ENCODE measurements at regions of chr3 and their contacts with region 1.

Region 1: GRCh38 chr3:150227839-150228238 is 180.3 kb upstream of the TSC22D2 start:
- DNase-seq: peak; percentile 69
- ATAC-seq: peak; percentile 93
- H3K4me3 ChIP-seq: no peak overlapping the region
- H3K27ac ChIP-seq: no peak overlapping the region
- H3K4me1 ChIP-seq: no peaks in the 10 kb centered on the region
- H3K27me3 ChIP-seq: no peaks in the 10 kb centered on the region
- CTCF ChIP-seq: peak; percentile 87
- POLR2A ChIP-seq: no peak
- RAD21 ChIP-seq: peak; percentile 89

Region 2: DNA sequence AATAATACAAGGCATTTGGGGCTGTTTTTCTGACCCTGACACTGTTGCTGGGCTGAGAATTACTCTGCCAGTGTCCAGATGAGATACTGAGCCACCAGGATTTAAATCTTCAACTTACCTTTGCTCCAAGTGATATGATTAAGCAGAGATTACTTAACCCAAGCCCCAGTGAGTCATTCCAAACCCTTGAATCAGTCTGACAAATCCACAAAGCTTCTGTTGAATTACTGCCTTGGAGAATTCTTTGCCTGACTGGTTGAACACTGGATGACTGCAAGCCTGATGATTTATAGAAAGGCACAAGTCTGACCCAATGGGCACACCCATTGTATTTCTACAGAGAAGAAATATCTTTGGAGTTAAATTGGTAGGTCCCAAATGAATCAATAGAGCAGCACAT is 92.1 kb after region 1 on chr3:
- CTCF ChIA-PET with region 1: no interaction called
- POLR2A ChIA-PET with region 1: no interaction called
- dilution Hi-C with region 1: no loop called
- in situ Hi-C with region 1: no loop called
- intact Hi-C with region 1: no loop called
- DNase-seq: peak; percentile 96
- ATAC-seq: peak; percentile 94
- H3K4me3 ChIP-seq: no peak overlapping the region
- H3K27ac ChIP-seq: no peak overlapping the region
- H3K4me1 ChIP-seq: peaks cover 7% of the 10 kb centered on the region
- H3K27me3 ChIP-seq: no peaks in the 10 kb centered on the region
- CTCF ChIP-seq: no peak
- POLR2A ChIP-seq: no peak
- RAD21 ChIP-seq: no peak

Region 3: GRCh38 chr3:150495563-150496168 is 267.8 kb after region 1 on chr3:
- CTCF ChIA-PET with region 1: no interaction called
- POLR2A ChIA-PET with region 1: interaction called, 7 read pairs
- dilution Hi-C with region 1: no loop called
- in situ Hi-C with region 1: loop called (anchors 5 kb)
- intact Hi-C with region 1: loop called (anchors 1 kb)
- DNase-seq: peak; percentile 60
- ATAC-seq: peak; percentile 80; the same call in 1 of the 2 replicates
- H3K4me3 ChIP-seq: no peak overlapping the region
- H3K27ac ChIP-seq: no peak overlapping the region
- H3K4me1 ChIP-seq: peaks cover 2% of the 10 kb centered on the region; the same call in 1 of the 2 replicates
- H3K27me3 ChIP-seq: no peaks in the 10 kb centered on the region
- CTCF ChIP-seq: peak; percentile 75
- POLR2A ChIP-seq: no peak
- RAD21 ChIP-seq: peak; percentile 75